Caco-2 (cell line): ENCODE measurements at regions of chr7 and their contacts with region 1.

Region 1: DNA sequence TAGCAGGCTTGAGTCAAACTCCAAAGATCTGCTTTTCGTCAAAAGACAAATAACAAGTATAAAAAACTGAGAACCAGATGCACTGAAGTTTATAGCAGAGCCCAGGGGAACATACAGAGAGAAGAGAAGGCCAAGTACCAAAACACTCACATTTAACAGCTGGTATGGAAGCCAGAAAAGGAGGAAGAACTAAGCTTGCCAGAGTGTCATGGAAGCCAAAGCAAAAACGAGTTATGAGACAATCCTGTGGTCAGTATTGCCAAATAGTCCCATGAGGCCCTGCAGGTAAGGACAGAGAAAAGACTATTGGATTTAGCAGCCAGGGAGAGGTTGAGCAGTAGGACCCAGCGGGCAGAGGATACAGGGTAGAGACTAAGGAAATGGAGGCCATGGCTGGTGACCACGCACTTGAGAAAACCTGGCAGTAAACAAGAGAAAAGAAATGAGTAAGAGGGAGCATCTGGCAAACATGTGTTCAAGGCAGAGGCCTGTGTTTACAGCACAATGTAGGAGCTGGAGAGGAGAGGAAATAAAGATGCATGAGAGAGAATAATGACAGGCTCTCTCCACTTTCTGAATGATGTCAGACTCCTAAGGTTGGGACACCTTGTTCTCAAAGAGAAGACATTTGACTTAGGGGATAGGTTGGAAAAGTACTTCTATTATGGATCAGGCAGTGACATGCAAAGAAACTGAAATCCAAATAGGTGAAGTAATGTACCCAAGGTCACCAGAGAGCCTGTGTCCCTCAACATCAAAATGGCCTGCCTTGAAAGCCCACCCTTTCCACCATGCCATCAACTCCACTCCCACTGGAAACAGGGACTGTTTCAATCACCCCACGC is 9.1 kb downstream of the CREB3L2 start:
- DNase-seq: peak; percentile 58 to 61
- H3K4me3 ChIP-seq: no peak overlapping the region; the same call in 1 of the 2 replicates
- H3K4me3 Mint-ChIP-seq: peak overlapping the region; percentile 54
- H3K27ac Mint-ChIP-seq: peak overlapping the region; percentile 95
- H3K4me1 ChIP-seq: peaks cover 61% of the 10 kb centered on the region
- H3K4me1 Mint-ChIP-seq: peaks cover 30% of the 10 kb centered on the region
- H3K27me3 ChIP-seq: no peaks in the 10 kb centered on the region
- H3K27me3 Mint-ChIP-seq: no peaks in the 10 kb centered on the region
- CTCF ChIP-seq: no peak

Region 2: GRCh38 chr7:137970253-137970975 is 22.4 kb before region 1 on chr7:
- CTCF ChIA-PET with region 1: interaction called, 10 read pairs
- POLR2A ChIA-PET with region 1: interaction called, 20 read pairs
- intact Hi-C with region 1: loop called (anchors 1 kb)
- DNase-seq: no peak
- H3K4me3 ChIP-seq: no peak overlapping the region
- H3K4me3 Mint-ChIP-seq: no peak overlapping the region
- H3K27ac Mint-ChIP-seq: no peak overlapping the region
- H3K4me1 ChIP-seq: peaks cover 58% of the 10 kb centered on the region
- H3K4me1 Mint-ChIP-seq: peaks cover 42% of the 10 kb centered on the region
- H3K27me3 ChIP-seq: no peaks in the 10 kb centered on the region
- H3K27me3 Mint-ChIP-seq: no peaks in the 10 kb centered on the region
- CTCF ChIP-seq: no peak

Region 3: DNA sequence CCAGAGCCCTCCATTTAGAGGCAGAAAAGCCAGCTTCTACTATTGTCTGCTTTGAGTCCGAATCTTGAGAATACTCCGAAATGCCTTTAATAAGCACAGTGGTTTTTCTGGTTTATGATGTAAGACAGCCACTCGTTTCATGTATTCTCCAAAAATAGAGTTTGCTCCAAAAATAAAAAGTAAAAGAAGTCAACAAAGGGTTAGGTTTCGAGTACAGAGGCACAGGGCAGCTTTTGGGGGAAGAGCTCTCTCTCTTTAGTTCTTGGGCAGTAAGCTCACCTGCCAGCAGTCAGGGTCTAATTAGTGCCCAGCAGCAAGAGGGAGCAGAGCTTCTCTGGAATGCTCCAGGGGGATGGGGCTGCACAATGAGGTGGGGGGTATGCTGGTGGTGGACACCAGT is 11.1 kb before region 1 on chr7:
- CTCF ChIA-PET with region 1: interaction called, 4 read pairs
- POLR2A ChIA-PET with region 1: interaction called, 7 read pairs
- intact Hi-C with region 1: loop called (anchors 1 kb)
- DNase-seq: no peak
- H3K4me3 ChIP-seq: no peak overlapping the region
- H3K4me3 Mint-ChIP-seq: no peak overlapping the region
- H3K27ac Mint-ChIP-seq: peak overlapping the region; percentile 29
- H3K4me1 ChIP-seq: peaks cover 82% of the 10 kb centered on the region
- H3K4me1 Mint-ChIP-seq: peaks cover 66% of the 10 kb centered on the region
- H3K27me3 ChIP-seq: no peaks in the 10 kb centered on the region
- H3K27me3 Mint-ChIP-seq: no peaks in the 10 kb centered on the region
- CTCF ChIP-seq: no peak

Region 4: GRCh38 chr7:138077809-138078208 is 85.0 kb after region 1 on chr7:
- CTCF ChIA-PET with region 1: no interaction called
- POLR2A ChIA-PET with region 1: no interaction called
- intact Hi-C with region 1: no loop called
- DNase-seq: no peak
- H3K4me3 ChIP-seq: no peak overlapping the region
- H3K4me3 Mint-ChIP-seq: no peak overlapping the region
- H3K27ac Mint-ChIP-seq: no peak overlapping the region
- H3K4me1 ChIP-seq: no peaks in the 10 kb centered on the region
- H3K4me1 Mint-ChIP-seq: no peaks in the 10 kb centered on the region
- H3K27me3 ChIP-seq: no peaks in the 10 kb centered on the region
- H3K27me3 Mint-ChIP-seq: no peaks in the 10 kb centered on the region
- CTCF ChIP-seq: no peak